Ascending aorta (tissue), 2 donors: ENCODE measurements at regions of chr19 and their contacts with region 1.

Region 1: DNA sequence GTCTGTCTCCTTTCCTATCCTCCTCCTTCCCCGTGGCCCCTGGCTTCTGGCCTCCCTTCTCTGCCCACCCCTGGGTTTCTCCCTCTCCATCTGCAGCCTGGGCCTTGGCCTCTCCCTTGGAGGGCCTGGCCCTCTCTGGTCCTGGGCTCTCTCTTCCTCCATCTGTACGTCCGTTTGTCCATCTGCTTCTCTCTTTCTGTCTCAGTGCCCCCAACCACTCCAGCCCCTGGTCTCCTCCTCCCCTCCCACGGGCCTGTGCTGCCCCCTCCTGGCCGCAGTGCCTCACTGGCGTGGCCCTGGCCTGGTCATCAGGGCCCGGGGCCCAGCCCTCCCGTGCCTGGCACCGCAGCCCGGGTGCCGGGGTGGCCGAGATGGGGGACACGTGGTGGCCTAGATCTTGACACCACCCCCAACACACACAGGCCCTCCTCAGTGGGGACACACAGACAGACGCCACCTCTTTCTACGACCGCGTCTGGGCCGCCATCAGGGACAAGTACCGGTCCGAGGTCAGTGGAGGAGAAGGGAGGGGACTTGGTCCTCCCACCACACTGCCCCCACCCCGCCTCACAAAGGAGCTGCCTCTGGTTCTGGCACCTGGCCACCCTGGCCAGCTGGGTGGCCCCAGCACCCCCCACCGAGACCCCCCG is 11.3 kb downstream of the PRKCSH start:
- DNase-seq: no peak
- H3K4me3 ChIP-seq: no peak overlapping the region
- H3K27ac ChIP-seq: no peak overlapping the region
- H3K4me1 ChIP-seq: no peaks in the 10 kb centered on the region
- H3K27me3 ChIP-seq: no peaks in the 10 kb centered on the region
- CTCF ChIP-seq: peak; percentile 71 to 88 (median 77)

Region 2: DNA sequence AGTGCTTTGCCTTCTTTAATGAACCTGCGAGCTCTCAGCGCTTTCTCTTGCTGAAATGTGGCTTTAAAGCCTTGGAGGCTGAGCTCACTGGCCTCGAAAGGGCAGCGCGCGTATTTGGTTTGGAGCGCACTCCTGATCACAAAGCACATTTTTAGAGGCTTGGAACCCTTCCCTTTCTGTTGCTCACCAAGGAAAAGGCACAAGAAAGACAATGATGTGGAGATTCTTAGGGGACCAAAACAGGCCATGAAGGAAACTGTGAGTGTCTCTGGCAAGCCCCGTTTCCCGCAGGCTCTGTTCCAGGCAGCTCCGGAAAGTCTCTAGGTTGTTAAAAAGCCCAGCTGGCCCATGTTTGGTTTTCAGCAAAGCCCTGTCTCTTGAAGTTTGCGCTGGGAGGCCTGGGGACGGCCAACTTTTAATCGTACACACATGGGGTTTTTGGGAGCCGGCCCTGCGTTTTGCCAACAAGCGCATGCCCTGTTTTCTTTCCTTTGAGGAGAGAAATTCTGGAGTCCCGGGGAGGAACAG is 281.8 kb before region 1 on chr19:
- intact Hi-C with region 1: no loop called
- DNase-seq: peak; percentile 52 to 97
- H3K4me3 ChIP-seq: peak overlapping the region in 1 of 2 donors; percentile 52
- H3K27ac ChIP-seq: peak overlapping the region; percentile 94
- H3K4me1 ChIP-seq: peaks cover 30 to 62% of the 10 kb centered on the region in 2 donors
- H3K27me3 ChIP-seq: no peaks in the 10 kb centered on the region
- CTCF ChIP-seq: peak in 1 of 3 experiments; percentile 16

Region 3: DNA sequence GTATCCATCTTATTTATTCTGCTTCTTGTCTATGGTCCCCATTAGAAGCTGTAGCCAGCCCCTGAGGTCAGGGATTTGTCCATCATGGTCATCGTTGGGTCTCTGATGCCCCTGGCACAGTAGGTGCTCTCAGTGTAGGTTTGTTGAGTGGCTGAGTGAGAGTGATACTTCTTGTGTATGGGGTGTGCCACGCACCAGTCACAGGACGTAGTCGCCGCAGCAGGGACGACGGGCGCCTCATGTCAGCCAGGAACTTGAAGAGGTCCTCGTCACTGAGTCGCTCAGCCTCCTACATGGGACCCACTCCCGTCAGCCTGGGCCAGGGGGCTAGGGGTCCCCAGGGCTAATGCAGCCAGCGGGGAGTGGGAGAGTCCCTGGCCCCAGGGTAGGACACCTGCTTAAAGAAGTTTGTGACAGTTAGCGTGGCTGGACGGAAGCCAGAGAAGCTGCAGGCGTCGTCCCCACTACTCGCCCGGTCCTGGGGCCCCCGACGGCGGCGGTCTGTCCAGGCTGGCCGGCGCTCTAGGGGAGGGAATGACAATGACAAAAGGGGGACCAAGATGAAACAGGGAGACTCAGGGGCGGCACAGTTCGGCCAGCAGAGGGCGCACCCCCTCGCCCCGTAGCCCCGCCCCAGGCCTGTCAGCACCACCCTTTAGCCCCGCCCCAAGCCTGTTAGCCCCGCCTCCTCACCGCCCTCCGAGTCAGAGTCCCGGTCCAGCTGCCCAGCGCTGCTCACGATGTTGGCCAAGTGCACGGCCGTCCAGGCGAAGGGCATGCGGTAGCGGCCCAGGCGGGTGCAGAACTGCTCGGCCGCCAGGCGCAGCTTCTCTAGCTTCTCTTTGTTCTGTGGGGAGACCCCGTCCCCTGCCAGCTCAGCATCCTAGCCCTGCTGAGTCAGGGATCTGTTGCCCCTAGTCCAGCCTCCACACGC is 203.6 kb before region 1 on chr19:
- intact Hi-C with region 1: loop called (anchors 1 kb)
- DNase-seq: peak; percentile 70 to 94
- H3K4me3 ChIP-seq: no peak overlapping the region
- H3K27ac ChIP-seq: peak overlapping the region in 1 of 2 donors; percentile 9
- H3K4me1 ChIP-seq: peaks cover 0 to 8% of the 10 kb centered on the region in 2 donors
- H3K27me3 ChIP-seq: no peaks in the 10 kb centered on the region
- CTCF ChIP-seq: peak; percentile 50 to 80 (median 76)